Esophagus muscularis mucosa (tissue), 4 donors: ENCODE measurements at regions of chr19 and their contacts with region 1.

Region 1: GRCh38 chr19:18685597-18686190 is 2.2 kb downstream of the CRTC1 start:
- DNase-seq: no peak
- H3K4me3 ChIP-seq: no peak overlapping the region
- H3K27ac ChIP-seq: no peak overlapping the region
- H3K4me1 ChIP-seq: peaks cover 11 to 29% (median 25%) of the 10 kb centered on the region in 4 donors
- H3K27me3 ChIP-seq: no peaks in the 10 kb centered on the region
- CTCF ChIP-seq: no peak
- EP300 ChIP-seq: no peak
- POLR2A ChIP-seq: no peak

Region 2: GRCh38 chr19:18629166-18630088 is 56.3 kb before region 1 on chr19:
- intact Hi-C with region 1: no loop called
- DNase-seq: no peak
- H3K4me3 ChIP-seq: no peak overlapping the region
- H3K27ac ChIP-seq: peak overlapping the region; percentile 16 to 62 (median 30)
- H3K4me1 ChIP-seq: peaks cover 0 to 15% (median 6%) of the 10 kb centered on the region in 4 donors
- H3K27me3 ChIP-seq: no peaks in the 10 kb centered on the region
- CTCF ChIP-seq: no peak
- EP300 ChIP-seq: peak; percentile 90
- POLR2A ChIP-seq: no peak

Region 3: GRCh38 chr19:18839465-18840287 is 154.0 kb after region 1 on chr19:
- intact Hi-C with region 1: loop called (anchors 5 kb)
- DNase-seq: no peak
- H3K4me3 ChIP-seq: no peak overlapping the region
- H3K27ac ChIP-seq: no peak overlapping the region
- H3K4me1 ChIP-seq: peaks cover 79 to 100% (median 93%) of the 10 kb centered on the region in 4 donors
- H3K27me3 ChIP-seq: no peaks in the 10 kb centered on the region
- CTCF ChIP-seq: no peak
- EP300 ChIP-seq: no peak
- POLR2A ChIP-seq: no peak